Posterior vena cava (tissue), 2 donors: ENCODE measurements at regions of chr20 and their contacts with region 1.

Region 1: GRCh38 chr20:38997622-38998021 is 35.5 kb downstream of the DHX35 start:
- DNase-seq: no peak

Region 2: GRCh38 chr20:38453941-38454340 is 543.7 kb before region 1 on chr20:
- intact Hi-C with region 1: no loop called
- DNase-seq: peak; percentile 1

Region 3: DNA sequence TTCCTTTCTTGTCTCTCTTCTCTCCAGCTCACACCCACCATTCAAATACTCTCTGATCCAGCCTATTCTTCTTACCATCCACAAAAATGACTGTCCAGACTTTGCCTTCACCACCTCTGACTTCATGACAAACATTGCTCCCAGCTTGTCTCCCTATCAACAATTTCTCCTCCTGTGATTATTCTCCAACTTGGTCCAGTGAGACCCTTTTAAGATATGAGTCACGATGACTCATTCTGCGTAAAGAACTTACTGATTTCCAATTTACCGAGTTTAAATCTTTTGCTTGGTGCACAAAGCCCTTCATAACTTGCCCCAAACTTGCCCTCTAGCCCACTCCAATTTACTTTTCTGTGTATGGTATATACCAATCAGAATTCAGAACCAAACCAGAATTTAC is 858.2 kb after region 1 on chr20:
- intact Hi-C with region 1: loop called in 1 of 2 experiments (anchors 5 kb)
- DNase-seq: no peak